Activated T-helper 1 cell treated with anti-CD3 and anti-CD28 coated beads, Interleukin-12 subunit alpha, Interleukin-12 subunit beta, Interleukin-2, Interleukin-4 antibody, amounts not matched to agents 30 ng/mL and 10 ng/mL and 1 ng/mL, durations not matched to agents 14 hours and 24 hours and 36 hours (primary cell): ENCODE measurements at regions of chr14 and their contacts with region 1.

Region 1: GRCh38 chr14:106395456-106396050 is 869.2 kb downstream of the TMEM121 start:
- DNase-seq: no peak
- H3K4me3 Mint-ChIP-seq: peak overlapping the region; percentile 70
- H3K27ac Mint-ChIP-seq: peak overlapping the region; percentile 94
- H3K4me1 Mint-ChIP-seq: peaks cover 58% of the 10 kb centered on the region
- H3K27me3 Mint-ChIP-seq: no peaks in the 10 kb centered on the region

Region 2: DNA sequence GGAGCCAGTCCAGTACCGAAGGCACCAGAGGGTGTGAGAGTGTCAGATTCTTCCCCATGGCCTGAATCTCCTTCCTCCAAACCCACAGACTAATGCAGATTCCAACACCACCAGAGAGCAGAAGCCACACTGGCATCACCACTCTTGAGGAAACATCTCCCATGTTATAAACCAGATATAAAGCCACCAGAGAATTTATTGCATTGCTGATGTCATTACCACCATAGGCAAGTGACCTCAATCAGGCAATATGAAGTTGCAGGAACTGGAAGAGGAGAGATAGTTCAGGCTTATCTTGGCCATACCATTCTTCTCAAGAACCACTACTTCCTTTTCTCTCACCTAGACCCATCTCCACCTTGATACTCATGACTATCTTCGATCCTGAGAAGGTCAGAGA is 215.8 kb before region 1 on chr14:
- intact Hi-C with region 1: loop called (anchors 5 kb)
- DNase-seq: no peak
- H3K4me3 Mint-ChIP-seq: no peak overlapping the region
- H3K27ac Mint-ChIP-seq: no peak overlapping the region
- H3K4me1 Mint-ChIP-seq: peaks cover 63% of the 10 kb centered on the region
- H3K27me3 Mint-ChIP-seq: peaks cover 47% of the 10 kb centered on the region

Region 3: GRCh38 chr14:106372870-106373652 is 22.5 kb before region 1 on chr14:
- intact Hi-C with region 1: loop called (anchors 2 kb)
- DNase-seq: peak; percentile 73
- H3K4me3 Mint-ChIP-seq: peak overlapping the region; percentile 19
- H3K27ac Mint-ChIP-seq: no peak overlapping the region
- H3K4me1 Mint-ChIP-seq: peaks cover 29% of the 10 kb centered on the region
- H3K27me3 Mint-ChIP-seq: peaks cover 2% of the 10 kb centered on the region

Region 4: GRCh38 chr14:106417224-106418049 is 21.9 kb after region 1 on chr14:
- intact Hi-C with region 1: loop called (anchors 2 kb)
- DNase-seq: peak; percentile 86
- H3K4me3 Mint-ChIP-seq: no peak overlapping the region
- H3K27ac Mint-ChIP-seq: no peak overlapping the region
- H3K4me1 Mint-ChIP-seq: peaks cover 15% of the 10 kb centered on the region
- H3K27me3 Mint-ChIP-seq: peaks cover 9% of the 10 kb centered on the region